Activated naive CD4-positive, alpha-beta T cell treated with anti-CD3 and anti-CD28 coated beads for 36 hours (primary cell): ENCODE measurements at regions of chr1 and their contacts with region 1.

Region 1: DNA sequence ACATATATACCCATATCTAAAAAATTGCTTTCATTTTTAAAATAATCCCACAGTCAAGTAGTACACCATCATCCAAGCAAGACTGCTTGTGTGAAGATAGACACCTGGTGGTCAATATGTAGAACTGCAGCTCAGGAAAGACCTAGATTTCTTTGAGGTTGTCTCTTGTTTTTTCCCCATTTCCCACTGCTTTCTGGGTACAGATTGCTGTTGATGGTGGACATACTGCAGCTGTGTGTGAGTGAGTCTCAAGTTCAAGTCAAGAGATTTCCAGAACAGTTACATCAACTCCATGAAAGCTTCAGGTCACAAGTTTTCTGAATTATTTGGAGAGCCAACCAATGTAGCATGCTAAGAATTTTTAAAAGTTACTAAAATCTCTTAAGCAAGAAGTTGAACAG is 306.4 kb downstream of the DUSP10 start:
- DNase-seq: no peak
- H3K4me3 Mint-ChIP-seq: no peak overlapping the region
- H3K27ac Mint-ChIP-seq: no peak overlapping the region
- H3K4me1 Mint-ChIP-seq: peaks cover 34% of the 10 kb centered on the region
- H3K27me3 Mint-ChIP-seq: peaks cover 4% of the 10 kb centered on the region

Region 2: GRCh38 chr1:220873868-220874655 is 561.4 kb before region 1 on chr1:
- CTCF ChIA-PET with region 1: no interaction called
- intact Hi-C with region 1: loop called (anchors 1 kb)
- DNase-seq: peak; percentile 43
- H3K4me3 Mint-ChIP-seq: no peak overlapping the region
- H3K27ac Mint-ChIP-seq: no peak overlapping the region
- H3K4me1 Mint-ChIP-seq: peaks cover 23% of the 10 kb centered on the region
- H3K27me3 Mint-ChIP-seq: peaks cover 74% of the 10 kb centered on the region

Region 3: GRCh38 chr1:221263831-221264767 is 171.4 kb before region 1 on chr1:
- CTCF ChIA-PET with region 1: interaction called, 24 read pairs
- intact Hi-C with region 1: loop called (anchors 1 kb)
- DNase-seq: peak; percentile 60
- H3K4me3 Mint-ChIP-seq: no peak overlapping the region
- H3K27ac Mint-ChIP-seq: no peak overlapping the region
- H3K4me1 Mint-ChIP-seq: no peaks in the 10 kb centered on the region
- H3K27me3 Mint-ChIP-seq: peaks cover 2% of the 10 kb centered on the region

Region 4: GRCh38 chr1:221725735-221726672 is 290.5 kb after region 1 on chr1:
- CTCF ChIA-PET with region 1: no interaction called
- intact Hi-C with region 1: loop called (anchors 1 kb)
- DNase-seq: no peak
- H3K4me3 Mint-ChIP-seq: peak overlapping the region; percentile 69
- H3K27ac Mint-ChIP-seq: peak overlapping the region; percentile 99
- H3K4me1 Mint-ChIP-seq: peaks cover 67% of the 10 kb centered on the region
- H3K27me3 Mint-ChIP-seq: no peaks in the 10 kb centered on the region

Region 5: GRCh38 chr1:221794079-221794670 is 358.7 kb after region 1 on chr1:
- CTCF ChIA-PET with region 1: no interaction called
- intact Hi-C with region 1: loop called (anchors 1 kb)
- DNase-seq: peak; percentile 73
- H3K4me3 Mint-ChIP-seq: peak overlapping the region; percentile 17
- H3K27ac Mint-ChIP-seq: peak overlapping the region; percentile 88
- H3K4me1 Mint-ChIP-seq: peaks cover 40% of the 10 kb centered on the region
- H3K27me3 Mint-ChIP-seq: no peaks in the 10 kb centered on the region

Region 6: GRCh38 chr1:221994274-221994698 is 558.8 kb after region 1 on chr1:
- CTCF ChIA-PET with region 1: no interaction called
- intact Hi-C with region 1: loop called (anchors 1 kb)
- DNase-seq: peak; percentile 55
- H3K4me3 Mint-ChIP-seq: no peak overlapping the region
- H3K27ac Mint-ChIP-seq: peak overlapping the region; percentile 94
- H3K4me1 Mint-ChIP-seq: peaks cover 33% of the 10 kb centered on the region
- H3K27me3 Mint-ChIP-seq: no peaks in the 10 kb centered on the region